ENCODE measurements at regions of chr15 and their contacts with region 1.

Region 1: DNA sequence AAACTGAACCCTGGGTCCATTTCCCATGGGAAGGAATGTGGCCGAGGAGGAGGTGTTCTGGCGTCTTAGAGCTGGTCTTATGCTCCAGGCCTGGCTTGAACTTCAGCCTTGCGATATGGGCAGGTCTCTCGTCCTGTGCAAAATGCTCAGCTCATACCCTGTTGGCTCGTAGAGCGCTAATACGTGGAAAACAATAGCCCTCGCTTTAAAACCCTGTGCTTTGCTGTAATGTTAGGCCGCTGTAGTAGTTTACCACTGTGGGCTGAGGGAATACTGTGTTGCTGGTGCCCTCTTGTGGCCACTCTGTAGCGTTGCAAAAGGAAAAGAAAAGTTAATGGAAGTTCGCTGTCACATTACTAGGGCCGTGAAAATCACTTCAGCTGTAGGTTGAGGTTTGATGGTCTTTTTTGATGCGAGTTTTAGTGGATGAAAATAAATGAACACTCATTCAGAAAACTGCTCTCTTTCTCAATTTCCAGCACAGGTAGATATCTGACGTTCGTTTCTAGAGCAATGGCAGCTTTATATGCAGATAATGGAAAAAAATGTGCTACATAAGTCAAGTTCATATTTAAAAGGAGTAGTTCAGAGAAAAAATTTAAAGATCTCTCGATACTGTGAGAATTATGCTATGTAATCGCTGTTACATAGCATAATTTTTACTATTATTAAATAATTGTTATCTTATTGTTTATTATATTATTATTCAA is 92.9 kb downstream of the MCTP2 start:
- DNase-seq: peak; percentile 61
- H3K4me3 Mint-ChIP-seq: no peak overlapping the region
- H3K27ac Mint-ChIP-seq: no peak overlapping the region
- H3K4me1 Mint-ChIP-seq: no peaks in the 10 kb centered on the region
- H3K27me3 Mint-ChIP-seq: no peaks in the 10 kb centered on the region
- CTCF ChIP-seq: peak; percentile 90

Region 2: DNA sequence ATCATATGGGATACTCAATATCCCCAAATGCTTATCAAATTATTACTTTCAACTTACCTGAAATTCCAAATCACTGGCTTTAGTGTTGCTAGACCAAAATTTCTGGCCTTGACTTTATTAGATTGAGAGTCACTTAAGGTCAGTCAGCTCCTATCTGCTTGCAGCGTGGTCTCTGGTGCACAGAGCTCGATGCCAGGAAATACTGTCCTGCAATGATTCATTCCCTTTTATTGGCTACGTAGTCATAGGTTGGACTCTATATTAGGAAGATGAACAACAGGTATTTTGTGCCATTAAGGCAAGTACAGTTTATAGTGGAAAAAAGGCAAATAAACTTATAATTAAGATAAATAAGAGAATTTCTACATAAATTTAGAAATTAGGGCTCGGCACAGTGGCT is 471.5 kb before region 1 on chr15:
- CTCF ChIA-PET with region 1: no interaction called
- POLR2A ChIA-PET with region 1: no interaction called
- intact Hi-C with region 1: no loop called
- DNase-seq: peak; percentile 21
- H3K4me3 Mint-ChIP-seq: no peak overlapping the region
- H3K27ac Mint-ChIP-seq: no peak overlapping the region
- H3K4me1 Mint-ChIP-seq: no peaks in the 10 kb centered on the region
- H3K27me3 Mint-ChIP-seq: no peaks in the 10 kb centered on the region
- CTCF ChIP-seq: no peak

Region 3: DNA sequence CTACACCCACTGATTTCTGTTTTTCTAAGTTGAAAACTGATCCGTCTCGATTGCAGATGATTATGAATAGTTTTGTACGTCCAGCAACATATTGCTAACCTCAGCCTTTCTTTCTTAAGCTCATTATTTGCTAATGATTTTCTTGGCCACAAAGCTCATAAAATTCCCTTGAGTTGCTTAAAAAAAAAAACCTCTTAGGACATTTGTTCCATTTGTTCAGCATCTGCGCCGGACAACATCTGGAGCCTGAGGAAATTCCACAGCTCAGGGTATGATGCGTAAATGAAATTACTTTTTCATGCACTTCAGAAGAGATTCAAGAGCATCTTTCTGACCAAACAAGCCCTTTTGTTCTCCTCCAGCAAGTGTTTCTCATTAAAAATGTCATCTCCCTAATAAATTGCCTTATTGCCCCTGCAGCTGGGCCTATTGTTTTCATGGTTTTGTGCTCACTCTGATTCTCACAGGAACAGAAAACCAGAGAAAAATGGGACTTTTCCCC is 342.0 kb before region 1 on chr15:
- CTCF ChIA-PET with region 1: no interaction called
- POLR2A ChIA-PET with region 1: no interaction called
- intact Hi-C with region 1: no loop called
- DNase-seq: no peak
- H3K4me3 Mint-ChIP-seq: no peak overlapping the region
- H3K27ac Mint-ChIP-seq: no peak overlapping the region
- H3K4me1 Mint-ChIP-seq: no peaks in the 10 kb centered on the region
- H3K27me3 Mint-ChIP-seq: no peaks in the 10 kb centered on the region
- CTCF ChIP-seq: no peak

Region 4: GRCh38 chr15:94163999-94164807 is 160.1 kb before region 1 on chr15:
- CTCF ChIA-PET with region 1: interaction called, 350 read pairs
- POLR2A ChIA-PET with region 1: interaction called, 34 read pairs
- intact Hi-C with region 1: loop called (anchors 1 kb)
- DNase-seq: peak; percentile 86
- H3K4me3 Mint-ChIP-seq: no peak overlapping the region
- H3K27ac Mint-ChIP-seq: no peak overlapping the region
- H3K4me1 Mint-ChIP-seq: no peaks in the 10 kb centered on the region
- H3K27me3 Mint-ChIP-seq: no peaks in the 10 kb centered on the region
- CTCF ChIP-seq: peak; percentile 86

Region 5: DNA sequence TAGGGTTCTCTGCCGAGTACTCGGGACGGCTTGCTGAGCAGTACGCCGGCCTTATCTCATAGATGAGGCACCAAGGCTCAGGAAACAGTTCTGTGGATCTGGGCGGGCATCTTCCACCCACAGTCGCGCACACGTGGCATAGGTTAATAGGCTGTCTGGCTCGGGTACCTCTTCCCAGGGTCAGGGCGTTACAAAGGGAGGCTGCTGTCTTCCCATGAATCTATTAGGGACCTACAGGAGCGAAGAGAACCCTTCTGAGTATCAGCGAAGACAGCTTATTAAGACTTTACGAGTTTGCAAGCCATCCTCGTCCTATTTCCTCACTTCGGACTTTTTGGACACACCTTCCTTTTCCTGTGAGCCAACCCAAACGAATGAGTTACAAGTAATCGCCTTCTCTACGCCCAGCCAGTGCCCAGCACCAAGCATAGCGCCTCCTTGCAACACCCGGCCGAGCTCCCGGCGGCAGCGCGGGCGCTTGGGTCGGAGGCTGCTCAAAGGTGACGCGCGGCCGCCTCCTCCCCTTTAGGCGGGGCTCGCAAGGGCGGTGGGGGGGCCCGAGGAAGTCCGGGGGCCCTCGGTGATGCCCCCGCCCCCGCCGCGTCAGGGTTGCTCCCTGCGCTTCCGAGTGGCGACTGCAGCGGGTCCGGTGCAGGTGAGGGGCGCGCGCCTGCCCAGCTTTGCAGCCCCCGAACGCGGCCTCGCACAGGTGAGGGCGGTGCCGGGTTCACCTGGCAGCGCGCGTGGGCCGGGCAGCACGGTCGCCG is 93.1 kb before region 1 on chr15 and contains the start of gene MCTP2:
- CTCF ChIA-PET with region 1: interaction called, 54 read pairs
- POLR2A ChIA-PET with region 1: interaction called, 56 read pairs
- intact Hi-C with region 1: loop called (anchors 1 kb)
- DNase-seq: peak; percentile 95
- H3K4me3 Mint-ChIP-seq: peak within 1 kb of the TSS; percentile 75
- H3K27ac Mint-ChIP-seq: peak within 1 kb of the TSS; percentile 85
- H3K4me1 Mint-ChIP-seq: peaks cover 33% of the 10 kb centered on the region
- H3K27me3 Mint-ChIP-seq: no peaks in the 10 kb centered on the region
- CTCF ChIP-seq: no peak
- total RNA-seq, gene MCTP2: 20.5 and 25.7 TPM in 2 replicates

Region 6: DNA sequence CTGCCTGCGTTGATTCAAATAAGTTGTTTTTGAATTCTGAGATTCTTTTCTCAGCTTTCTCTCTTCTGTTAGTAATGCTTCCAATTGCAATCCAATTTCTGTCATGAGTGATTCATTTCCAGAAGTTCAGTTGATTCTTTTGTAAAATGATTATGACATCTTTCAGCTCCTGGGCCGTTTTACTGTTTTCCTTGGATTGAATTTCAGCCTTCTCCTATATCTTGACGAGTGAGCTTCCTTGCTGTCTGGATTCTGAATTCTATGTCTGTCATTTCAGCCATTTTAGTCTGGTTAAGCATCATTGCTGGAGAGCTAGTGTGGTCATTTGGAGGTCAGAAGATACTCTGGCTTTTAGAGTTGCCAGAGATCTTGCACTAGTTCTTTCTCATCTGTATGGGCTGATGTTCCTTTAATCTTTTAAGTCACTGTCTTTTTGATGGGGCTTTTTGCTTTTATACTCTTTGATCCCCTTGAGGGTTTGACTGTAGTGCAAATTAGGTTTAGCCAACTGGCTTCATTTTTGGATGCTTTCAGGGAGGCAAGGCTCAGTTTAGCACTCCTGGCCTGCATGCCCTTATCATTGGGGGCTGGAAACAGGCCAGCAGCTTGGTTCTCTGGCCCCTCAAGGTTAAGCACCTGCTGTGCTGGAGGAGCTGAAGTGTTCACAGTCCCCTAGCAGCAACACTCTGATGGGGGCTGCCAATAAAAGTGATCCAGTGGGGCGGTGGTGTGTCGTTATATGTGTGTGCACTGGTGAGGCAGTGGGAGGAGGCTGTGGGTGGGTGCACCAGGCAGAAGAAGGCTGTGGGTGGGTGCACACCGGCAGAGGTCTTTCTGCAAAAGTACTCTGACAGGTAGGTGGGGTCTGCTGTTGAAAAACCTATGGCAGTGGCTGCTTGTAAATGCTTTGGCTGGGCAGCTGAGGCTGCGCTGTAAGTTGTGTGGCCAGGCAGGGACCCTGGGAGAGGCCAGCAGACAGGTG is 41.7 kb before region 1 on chr15:
- CTCF ChIA-PET with region 1: interaction called, 19 read pairs
- POLR2A ChIA-PET with region 1: no interaction called
- intact Hi-C with region 1: no loop called
- DNase-seq: peak; percentile 70
- H3K4me3 Mint-ChIP-seq: no peak overlapping the region
- H3K27ac Mint-ChIP-seq: peak overlapping the region; percentile 43
- H3K4me1 Mint-ChIP-seq: peaks cover 30% of the 10 kb centered on the region
- H3K27me3 Mint-ChIP-seq: no peaks in the 10 kb centered on the region
- CTCF ChIP-seq: no peak

Region 7: DNA sequence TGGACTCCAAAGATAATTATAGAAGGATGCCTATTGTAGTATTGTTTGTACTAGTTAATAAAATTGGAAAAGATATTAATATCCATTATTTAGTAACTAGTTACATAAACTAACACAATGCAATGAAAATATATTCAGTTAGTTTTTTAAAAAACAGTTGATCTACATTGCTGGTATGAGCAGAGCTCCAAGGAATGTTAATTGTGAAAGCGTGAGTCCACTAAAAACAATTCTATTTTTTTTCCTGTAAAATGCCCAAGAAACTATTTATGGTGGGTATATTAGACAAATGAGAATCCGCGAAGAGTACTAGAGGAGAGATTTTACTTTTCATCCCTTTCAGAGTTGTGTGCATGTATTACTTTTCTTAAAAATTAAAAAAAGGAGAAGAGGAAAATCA is 11.3 kb after region 1 on chr15:
- CTCF ChIA-PET with region 1: interaction called, 22 read pairs
- POLR2A ChIA-PET with region 1: interaction called, 3 read pairs
- intact Hi-C with region 1: no loop called
- DNase-seq: no peak
- H3K4me3 Mint-ChIP-seq: no peak overlapping the region
- H3K27ac Mint-ChIP-seq: no peak overlapping the region
- H3K4me1 Mint-ChIP-seq: peaks cover under 1% of the 10 kb centered on the region
- H3K27me3 Mint-ChIP-seq: no peaks in the 10 kb centered on the region
- CTCF ChIP-seq: no peak

Region 8: GRCh38 chr15:94576889-94577533 is 252.7 kb after region 1 on chr15:
- CTCF ChIA-PET with region 1: no interaction called
- POLR2A ChIA-PET with region 1: no interaction called
- intact Hi-C with region 1: loop called (anchors 1 kb)
- DNase-seq: peak; percentile 72
- H3K4me3 Mint-ChIP-seq: no peak overlapping the region
- H3K27ac Mint-ChIP-seq: no peak overlapping the region
- H3K4me1 Mint-ChIP-seq: peaks cover 5% of the 10 kb centered on the region
- H3K27me3 Mint-ChIP-seq: no peaks in the 10 kb centered on the region
- CTCF ChIP-seq: peak; percentile 58